ENCODE measurements at regions of chr5 and their contacts with region 1.

Region 1: GRCh38 chr5:56838409-56839039 is 23.2 kb downstream of the MAP3K1 start:
- DNase-seq: no peak
- ATAC-seq: peak; percentile 59
- H3K4me3 Mint-ChIP-seq: peak overlapping the region; percentile 42
- H3K27ac Mint-ChIP-seq: peak overlapping the region; percentile 78
- H3K4me1 Mint-ChIP-seq: peaks cover 95% of the 10 kb centered on the region
- H3K27me3 Mint-ChIP-seq: no peaks in the 10 kb centered on the region
- CTCF ChIP-seq: no peak

Region 2: DNA sequence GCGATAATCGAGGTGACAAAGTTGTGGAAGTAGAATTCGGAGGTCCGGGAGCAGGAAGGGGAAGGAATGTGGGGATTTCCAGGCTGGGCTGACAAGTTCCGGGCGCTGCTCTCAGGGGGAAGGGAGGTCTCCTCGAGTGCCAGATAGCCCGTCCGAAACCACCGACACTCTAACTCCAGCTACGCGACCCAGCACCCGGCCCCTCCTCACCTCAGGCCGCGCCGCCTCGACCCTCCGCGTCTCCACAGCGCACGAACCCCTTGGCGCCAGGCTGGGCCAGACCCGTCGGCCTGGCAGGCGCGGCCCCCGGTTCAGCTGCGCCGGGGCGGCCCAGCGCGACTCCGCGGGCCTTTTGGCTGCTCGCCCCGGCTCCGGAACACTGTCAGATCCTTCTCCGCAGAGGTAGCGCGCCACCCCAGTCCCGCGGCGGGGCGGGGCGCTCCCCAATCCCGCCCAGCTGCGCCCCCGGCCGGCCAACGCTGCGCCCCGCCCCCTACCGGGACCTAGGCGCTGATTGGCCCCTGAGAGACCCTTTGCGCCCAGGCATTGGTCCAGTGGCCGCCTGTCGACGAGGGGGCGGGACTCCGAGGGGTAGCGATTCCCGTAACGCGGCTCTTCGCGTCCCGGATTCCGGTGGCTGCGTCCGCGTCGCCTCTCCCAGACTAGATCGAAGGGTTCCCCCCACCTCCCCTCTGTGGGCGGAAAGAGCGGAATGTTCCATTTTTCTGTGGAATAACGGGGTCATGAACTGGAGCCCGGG is 843.8 kb before region 1 on chr5 and contains the start of gene IL6ST:
- CTCF ChIA-PET with region 1: no interaction called
- POLR2A ChIA-PET with region 1: no interaction called
- intact Hi-C with region 1: loop called (anchors 5 kb)
- DNase-seq: peak; percentile 95
- ATAC-seq: peak; percentile 92
- H3K4me3 Mint-ChIP-seq: peak within 1 kb of the TSS; percentile 96
- H3K27ac Mint-ChIP-seq: peak within 1 kb of the TSS; percentile 95
- H3K4me1 Mint-ChIP-seq: peaks cover 38% of the 10 kb centered on the region
- H3K27me3 Mint-ChIP-seq: peaks cover 5% of the 10 kb centered on the region
- CTCF ChIP-seq: no peak
- total RNA-seq, gene IL6ST: 39.8 and 48.3 TPM in 2 replicates

Region 3: GRCh38 chr5:56319526-56320181 is 518.9 kb before region 1 on chr5:
- CTCF ChIA-PET with region 1: interaction called, 3 read pairs
- POLR2A ChIA-PET with region 1: interaction called, 8 read pairs
- intact Hi-C with region 1: loop called (anchors 2 kb)
- DNase-seq: no peak
- ATAC-seq: no peak
- H3K4me3 Mint-ChIP-seq: no peak overlapping the region
- H3K27ac Mint-ChIP-seq: no peak overlapping the region
- H3K4me1 Mint-ChIP-seq: peaks cover 41% of the 10 kb centered on the region
- H3K27me3 Mint-ChIP-seq: no peaks in the 10 kb centered on the region
- CTCF ChIP-seq: no peak

Region 4: GRCh38 chr5:56475689-56476486 is 362.6 kb before region 1 on chr5:
- CTCF ChIA-PET with region 1: interaction called, 20 read pairs
- POLR2A ChIA-PET with region 1: interaction called, 7 read pairs
- intact Hi-C with region 1: loop called (anchors 1 kb)
- DNase-seq: no peak
- ATAC-seq: no peak
- H3K4me3 Mint-ChIP-seq: no peak overlapping the region
- H3K27ac Mint-ChIP-seq: no peak overlapping the region
- H3K4me1 Mint-ChIP-seq: peaks cover 23% of the 10 kb centered on the region
- H3K27me3 Mint-ChIP-seq: no peaks in the 10 kb centered on the region
- CTCF ChIP-seq: no peak

Region 5: GRCh38 chr5:56543441-56544390 is 294.8 kb before region 1 on chr5:
- CTCF ChIA-PET with region 1: no interaction called
- POLR2A ChIA-PET with region 1: no interaction called
- intact Hi-C with region 1: no loop called
- DNase-seq: no peak
- ATAC-seq: no peak
- H3K4me3 Mint-ChIP-seq: no peak overlapping the region
- H3K27ac Mint-ChIP-seq: no peak overlapping the region
- H3K4me1 Mint-ChIP-seq: peaks cover 15% of the 10 kb centered on the region
- H3K27me3 Mint-ChIP-seq: no peaks in the 10 kb centered on the region
- CTCF ChIP-seq: no peak

Region 6: GRCh38 chr5:56588636-56589480 is 249.7 kb before region 1 on chr5:
- CTCF ChIA-PET with region 1: interaction called, 9 read pairs
- POLR2A ChIA-PET with region 1: no interaction called
- intact Hi-C with region 1: loop called (anchors 2 kb)
- DNase-seq: peak; percentile 69
- ATAC-seq: peak; percentile 86
- H3K4me3 Mint-ChIP-seq: peak overlapping the region; percentile 64
- H3K27ac Mint-ChIP-seq: peak overlapping the region; percentile 97
- H3K4me1 Mint-ChIP-seq: peaks cover 69% of the 10 kb centered on the region
- H3K27me3 Mint-ChIP-seq: no peaks in the 10 kb centered on the region
- CTCF ChIP-seq: no peak

Region 7: DNA sequence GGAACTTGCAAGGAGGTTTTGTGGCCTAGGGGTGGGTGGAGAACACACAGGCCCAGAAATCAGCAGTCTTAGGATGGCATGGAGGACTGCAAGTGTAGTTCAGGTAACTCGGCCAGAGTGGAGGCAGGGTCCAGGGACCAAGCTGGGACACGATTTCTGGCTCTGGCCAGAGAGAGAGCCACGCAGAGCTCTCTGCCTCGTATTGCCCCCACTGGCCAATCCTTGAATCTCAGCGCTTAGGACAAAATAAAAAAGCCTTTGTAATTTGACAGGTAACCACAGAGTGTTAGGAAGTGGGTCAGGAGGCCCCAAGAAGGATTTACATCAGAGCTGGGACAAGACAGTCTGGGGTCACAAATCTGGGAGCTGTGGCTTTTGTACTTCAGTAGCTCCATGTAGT is 11.5 kb before region 1 on chr5:
- CTCF ChIA-PET with region 1: interaction called, 25 read pairs
- POLR2A ChIA-PET with region 1: interaction called, 7 read pairs
- intact Hi-C with region 1: no loop called
- DNase-seq: no peak
- ATAC-seq: peak; percentile 11
- H3K4me3 Mint-ChIP-seq: peak overlapping the region; percentile 24
- H3K27ac Mint-ChIP-seq: peak overlapping the region; percentile 73
- H3K4me1 Mint-ChIP-seq: peaks cover 96% of the 10 kb centered on the region
- H3K27me3 Mint-ChIP-seq: no peaks in the 10 kb centered on the region
- CTCF ChIP-seq: no peak

Measured in activated B cell treated with CpG ODN at 0.5 μM for 24 hours (primary cell).